Posterior cingulate gyrus (tissue), 11 donors: ENCODE measurements at regions of chr12 and their contacts with region 1.

Region 1: DNA sequence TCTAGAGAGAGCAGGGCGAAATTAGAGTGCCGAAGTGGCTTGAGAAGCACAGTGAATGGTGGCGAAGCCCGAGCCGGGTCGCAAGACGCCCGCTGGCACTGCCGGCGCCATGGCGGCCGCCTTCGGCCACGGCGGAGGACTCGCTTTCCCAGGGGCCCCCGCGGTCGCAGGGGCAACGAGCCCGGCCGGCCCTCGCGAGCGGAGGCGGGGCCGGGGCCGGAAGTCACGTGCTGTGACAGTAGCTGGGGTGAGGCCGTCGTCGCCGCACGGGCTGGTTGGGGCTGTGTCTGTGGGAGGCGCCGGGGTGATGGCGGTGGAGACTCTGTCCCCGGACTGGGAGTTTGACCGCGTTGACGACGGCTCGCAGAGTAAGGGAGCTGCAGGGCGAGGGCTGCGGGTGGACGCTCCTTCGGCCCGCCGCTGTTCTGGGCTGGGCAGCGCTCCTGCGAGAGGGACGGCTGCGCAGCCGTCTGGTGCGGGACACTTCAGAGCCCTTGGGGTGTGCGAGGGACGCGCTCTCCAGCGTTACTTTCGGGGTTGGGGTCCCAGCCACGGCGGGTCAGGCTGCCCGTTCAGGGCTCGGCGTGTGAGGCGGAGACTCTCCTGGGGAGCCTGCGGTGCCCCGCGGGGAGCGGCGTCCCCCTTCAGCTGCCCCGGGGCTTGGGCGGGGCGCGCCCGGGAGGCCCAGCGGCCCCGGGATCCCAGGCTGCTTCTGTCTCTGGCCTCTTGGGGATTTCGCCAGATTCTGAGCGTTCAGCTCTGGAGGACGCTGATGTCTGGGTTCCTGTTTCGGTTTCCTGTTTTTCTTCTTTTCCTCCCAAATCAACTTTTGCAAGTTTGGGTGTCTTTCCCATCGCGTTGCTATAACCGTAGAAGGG is at the start of gene WASHC4:
- DNase-seq: peak; percentile 93 to 99 (median 95)

Region 2: DNA sequence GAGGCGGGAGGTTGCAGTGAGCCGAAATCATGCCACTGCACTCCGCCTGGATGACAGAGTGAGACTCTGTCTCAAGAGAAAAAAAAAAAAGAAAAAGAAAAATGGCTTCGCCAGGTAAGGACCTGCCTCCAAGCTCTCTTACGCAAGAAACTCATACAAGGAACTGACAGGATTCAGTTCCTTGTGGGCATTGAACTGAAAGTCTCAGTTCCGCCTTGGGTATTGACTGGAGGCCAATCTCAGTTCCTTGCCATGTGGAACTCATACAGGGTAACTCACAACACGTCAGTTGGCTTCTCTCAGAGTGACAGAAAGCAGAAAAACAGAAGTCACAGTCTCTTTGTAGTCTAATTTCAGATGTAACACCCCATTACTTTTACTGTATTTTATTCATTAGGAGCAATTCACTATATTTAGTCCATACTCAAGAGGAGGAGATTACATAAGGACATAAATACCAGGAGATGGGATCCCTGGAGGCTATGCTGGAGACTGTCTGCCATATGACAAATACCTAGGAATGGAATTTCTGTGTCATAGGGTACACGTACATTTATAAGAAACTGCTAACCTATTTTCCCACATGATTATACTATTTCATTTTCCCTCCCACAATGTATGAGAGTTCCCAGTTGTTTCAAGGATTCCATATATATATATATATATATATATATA is 133.0 kb before region 1 on chr12:
- intact Hi-C with region 1: no loop called
- DNase-seq: no peak

Region 3: GRCh38 chr12:105092336-105092735 is 15.4 kb before region 1 on chr12:
- intact Hi-C with region 1: no loop called
- DNase-seq: no peak

Region 4: GRCh38 chr12:105235732-105236476 is 128.2 kb after region 1 on chr12 and contains the start of gene APPL2:
- intact Hi-C with region 1: loop called (anchors 1 kb)
- DNase-seq: peak; percentile 87 to 98 (median 90)

Region 5: GRCh38 chr12:105534068-105534467 is 426.3 kb after region 1 on chr12:
- intact Hi-C with region 1: no loop called
- DNase-seq: no peak